ENCODE measurements at regions of chr5 and their contacts with region 1.

Region 1: GRCh38 chr5:76402886-76403765 is at the start of gene IQGAP2:
- DNase-seq: peak; percentile 88 to 94 (median 90)
- ATAC-seq: peak; percentile 73
- H3K4me3 ChIP-seq: peak within 1 kb of the TSS; percentile 81
- H3K4me3 Mint-ChIP-seq: peak within 1 kb of the TSS; percentile 87 to 99 (median 92)
- H3K27ac ChIP-seq: peak within 1 kb of the TSS; percentile 94
- H3K27ac Mint-ChIP-seq: peak within 1 kb of the TSS; percentile 94 to 100 (median 97)
- H3K4me1 ChIP-seq: peaks cover 19 to 20% of the 10 kb centered on the region in 2 donors
- H3K4me1 Mint-ChIP-seq: peaks cover 35 to 62% (median 55%) of the 10 kb centered on the region in 7 donors
- H3K27me3 ChIP-seq: no peaks in the 10 kb centered on the region
- H3K27me3 Mint-ChIP-seq: peaks cover 0 to 14% (median 0%) of the 10 kb centered on the region in 5 donors
- total RNA-seq, gene IQGAP2: 69.1 to 114 (median 88.0) TPM

Region 2: GRCh38 chr5:75236322-75237316 is 1166.5 kb before region 1 on chr5 and contains the start of gene ANKRD31:
- CTCF ChIA-PET with region 1: no interaction called
- POLR2A ChIA-PET with region 1: no interaction called
- intact Hi-C with region 1: loop called in 1 of 2 experiments (anchors 10 kb)
- DNase-seq: peak; percentile 83 to 97 (median 93)
- ATAC-seq: peak; percentile 100
- H3K4me3 ChIP-seq: peak within 1 kb of the TSS; percentile 69
- H3K4me3 Mint-ChIP-seq: peak within 1 kb of the TSS; percentile 78 to 99 (median 96)
- H3K27ac ChIP-seq: peak within 1 kb of the TSS; percentile 80
- H3K27ac Mint-ChIP-seq: peak within 1 kb of the TSS; percentile 89 to 99 (median 98)
- H3K4me1 ChIP-seq: peaks cover 0 to 17% of the 10 kb centered on the region in 2 donors
- H3K4me1 Mint-ChIP-seq: peaks cover 3 to 22% (median 18%) of the 10 kb centered on the region in 7 donors
- H3K27me3 ChIP-seq: no peaks in the 10 kb centered on the region
- H3K27me3 Mint-ChIP-seq: peaks cover 0 to 4% (median 0%) of the 10 kb centered on the region in 5 donors
- total RNA-seq, gene ANKRD31: 0.29 to 1.6 (median 0.93) TPM

Region 3: GRCh38 chr5:76074487-76075065 is 328.6 kb before region 1 on chr5:
- CTCF ChIA-PET with region 1: no interaction called
- POLR2A ChIA-PET with region 1: no interaction called
- intact Hi-C with region 1: loop called in 1 of 2 experiments (anchors 10 kb)
- DNase-seq: peak in 4 of 9 donors; percentile 8 to 13 (median 10)
- ATAC-seq: peak; percentile 61
- H3K4me3 ChIP-seq: no peak overlapping the region
- H3K4me3 Mint-ChIP-seq: no peak overlapping the region
- H3K27ac ChIP-seq: no peak overlapping the region
- H3K27ac Mint-ChIP-seq: no peak overlapping the region
- H3K4me1 ChIP-seq: no peaks in the 10 kb centered on the region
- H3K4me1 Mint-ChIP-seq: no peaks in the 10 kb centered on the region
- H3K27me3 ChIP-seq: no peaks in the 10 kb centered on the region
- H3K27me3 Mint-ChIP-seq: peaks cover 51 to 73% (median 63%) of the 10 kb centered on the region in 5 donors

Region 4: GRCh38 chr5:76325876-76326491 is 77.1 kb before region 1 on chr5:
- CTCF ChIA-PET with region 1: interaction called, 11 read pairs
- POLR2A ChIA-PET with region 1: interaction called, 29 read pairs
- intact Hi-C with region 1: loop called in 1 of 2 experiments (anchors 1 kb)
- DNase-seq: peak in 6 of 9 donors; percentile 30 to 63 (median 48)
- ATAC-seq: peak; percentile 90
- H3K4me3 ChIP-seq: peak overlapping the region; percentile 22
- H3K4me3 Mint-ChIP-seq: peak overlapping the region; percentile 71 to 84 (median 76)
- H3K27ac ChIP-seq: peak overlapping the region; percentile 59
- H3K27ac Mint-ChIP-seq: peak overlapping the region; percentile 88 to 98 (median 93)
- H3K4me1 ChIP-seq: peaks cover 31 to 57% of the 10 kb centered on the region in 2 donors
- H3K4me1 Mint-ChIP-seq: peaks cover 46 to 75% (median 58%) of the 10 kb centered on the region in 7 donors
- H3K27me3 ChIP-seq: no peaks in the 10 kb centered on the region
- H3K27me3 Mint-ChIP-seq: no peaks in the 10 kb centered on the region

Region 5: GRCh38 chr5:76443066-76443800 is 40.1 kb after region 1 on chr5:
- CTCF ChIA-PET with region 1: interaction called, 4 read pairs
- POLR2A ChIA-PET with region 1: no interaction called
- intact Hi-C with region 1: loop called in 1 of 2 experiments (anchors 5 kb)
- DNase-seq: no peak
- ATAC-seq: no peak
- H3K4me3 ChIP-seq: no peak overlapping the region
- H3K4me3 Mint-ChIP-seq: no peak overlapping the region
- H3K27ac ChIP-seq: no peak overlapping the region
- H3K27ac Mint-ChIP-seq: peak overlapping the region in 1 of 9 donors; percentile 58
- H3K4me1 ChIP-seq: peaks cover 0 to 5% of the 10 kb centered on the region in 2 donors
- H3K4me1 Mint-ChIP-seq: peaks cover 9 to 63% (median 54%) of the 10 kb centered on the region in 7 donors
- H3K27me3 ChIP-seq: no peaks in the 10 kb centered on the region
- H3K27me3 Mint-ChIP-seq: no peaks in the 10 kb centered on the region

Region 6: GRCh38 chr5:76582230-76583162 is 179.4 kb after region 1 on chr5:
- CTCF ChIA-PET with region 1: interaction called, 19 read pairs
- POLR2A ChIA-PET with region 1: interaction called, 5 read pairs
- intact Hi-C with region 1: loop called (anchors 1 to 2 kb)
- DNase-seq: no peak
- ATAC-seq: peak; percentile 76
- H3K4me3 ChIP-seq: no peak overlapping the region
- H3K4me3 Mint-ChIP-seq: no peak overlapping the region
- H3K27ac ChIP-seq: no peak overlapping the region
- H3K27ac Mint-ChIP-seq: peak overlapping the region in 4 of 9 donors; percentile 18 to 76 (median 47)
- H3K4me1 ChIP-seq: no peaks in the 10 kb centered on the region
- H3K4me1 Mint-ChIP-seq: peaks cover 0 to 31% (median 13%) of the 10 kb centered on the region in 7 donors
- H3K27me3 ChIP-seq: no peaks in the 10 kb centered on the region
- H3K27me3 Mint-ChIP-seq: no peaks in the 10 kb centered on the region

Region 7: GRCh38 chr5:76736679-76737556 is 333.8 kb after region 1 on chr5:
- CTCF ChIA-PET with region 1: no interaction called
- POLR2A ChIA-PET with region 1: no interaction called
- intact Hi-C with region 1: loop called in 1 of 2 experiments (anchors 1 kb)
- DNase-seq: no peak
- ATAC-seq: no peak
- H3K4me3 ChIP-seq: no peak overlapping the region
- H3K4me3 Mint-ChIP-seq: peak overlapping the region in 2 of 10 donors; percentile 51 to 69
- H3K27ac ChIP-seq: no peak overlapping the region
- H3K27ac Mint-ChIP-seq: peak overlapping the region in 2 of 9 donors; percentile 71 to 79
- H3K4me1 ChIP-seq: peaks cover 5 to 70% of the 10 kb centered on the region in 2 donors
- H3K4me1 Mint-ChIP-seq: peaks cover 8 to 49% (median 11%) of the 10 kb centered on the region in 7 donors
- H3K27me3 ChIP-seq: no peaks in the 10 kb centered on the region
- H3K27me3 Mint-ChIP-seq: peaks cover 3 to 11% (median 5%) of the 10 kb centered on the region in 5 donors